ENCODE measurements at regions of chr11 and their contacts with region 1.

Region 1: DNA sequence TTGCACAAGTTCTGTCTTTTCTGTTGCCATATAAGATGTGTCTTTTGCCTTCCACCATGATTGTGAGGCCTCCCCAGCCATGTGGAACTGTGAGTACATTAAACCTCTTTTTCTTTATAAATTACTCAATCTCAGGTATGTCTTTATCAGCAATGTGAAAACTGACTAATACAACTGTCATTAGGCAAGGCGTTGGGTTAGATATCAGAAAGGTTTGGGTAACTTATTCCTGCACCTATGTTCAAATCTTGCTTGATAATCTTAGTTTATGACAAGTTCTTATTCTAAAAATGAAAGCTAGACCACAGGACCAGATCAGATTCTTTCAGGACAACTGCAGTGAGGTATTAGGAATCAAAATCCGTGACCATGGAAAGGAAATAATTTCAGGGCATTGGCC is 160.6 kb upstream of the BDNF start:
- DNase-seq: no peak
- H3K4me3 ChIP-seq: no peak overlapping the region
- H3K27me3 ChIP-seq: no peaks in the 10 kb centered on the region
- CTCF ChIP-seq: no peak

Region 2: GRCh38 chr11:27926981-27927481 is 66.2 kb after region 1 on chr11:
- CTCF ChIA-PET with region 1: no interaction called
- POLR2A ChIA-PET with region 1: interaction called, 10 read pairs
- DNase-seq: peak; percentile 76
- H3K4me3 ChIP-seq: no peak overlapping the region
- H3K27me3 ChIP-seq: no peaks in the 10 kb centered on the region
- CTCF ChIP-seq: no peak

Region 3: GRCh38 chr11:28133146-28133545 is 272.3 kb after region 1 on chr11:
- CTCF ChIA-PET with region 1: no interaction called
- POLR2A ChIA-PET with region 1: no interaction called
- DNase-seq: no peak
- H3K4me3 ChIP-seq: no peak overlapping the region
- H3K27me3 ChIP-seq: no peaks in the 10 kb centered on the region
- CTCF ChIP-seq: no peak

Measured in BJ (cell line).